Astrocyte of the cerebellum (primary cell): ENCODE measurements at regions of chr20 and their contacts with region 1.

Region 1: GRCh38 chr20:24981790-24982189 is 10.8 kb downstream of the APMAP start:
- DNase-seq: no peak
- H3K4me3 ChIP-seq: no peak overlapping the region
- CTCF ChIP-seq: no peak

Region 2: DNA sequence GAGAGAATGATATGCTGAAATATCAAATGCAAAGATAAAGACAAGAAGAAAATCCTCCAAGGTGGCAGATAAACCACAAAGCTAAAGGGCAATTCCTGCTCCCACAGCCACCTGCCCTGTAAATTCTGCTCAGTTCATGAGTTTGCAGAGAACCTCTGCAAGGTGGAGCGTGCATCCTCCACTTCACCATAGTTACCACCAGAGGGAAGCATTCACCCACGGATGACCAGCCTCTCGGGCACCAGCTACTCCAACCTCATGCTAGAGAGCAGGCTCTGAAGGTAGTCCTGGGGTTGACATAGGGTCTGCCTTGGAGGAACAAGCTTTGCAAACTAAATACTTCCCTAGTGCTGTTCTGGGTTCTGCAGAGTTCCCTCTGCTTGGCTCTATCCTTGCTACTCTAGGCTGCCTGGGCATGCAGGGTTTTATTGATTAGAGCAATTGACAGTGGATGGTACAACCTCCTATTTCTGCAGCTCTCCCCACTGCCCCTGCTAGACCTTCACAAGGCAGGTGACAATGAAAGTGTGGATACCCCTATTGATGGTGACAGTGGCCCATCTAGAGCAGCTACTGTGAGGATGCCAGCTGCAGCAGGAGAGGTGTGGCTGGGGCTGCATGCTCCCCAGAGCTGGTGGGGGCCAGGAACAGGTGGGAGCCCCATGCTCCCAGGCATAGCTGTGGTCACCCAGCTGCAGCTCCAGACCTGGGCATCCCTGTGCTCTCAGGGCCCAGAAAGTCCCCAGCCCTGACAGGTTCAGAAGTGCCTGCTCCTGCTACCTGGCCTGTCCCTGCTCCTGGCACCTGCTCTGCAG is 1044.3 kb before region 1 on chr20:
- in situ Hi-C with region 1: loop called (anchors 10 kb)
- DNase-seq: peak; percentile 15
- H3K4me3 ChIP-seq: no peak overlapping the region
- CTCF ChIP-seq: peak; percentile 73

Region 3: DNA sequence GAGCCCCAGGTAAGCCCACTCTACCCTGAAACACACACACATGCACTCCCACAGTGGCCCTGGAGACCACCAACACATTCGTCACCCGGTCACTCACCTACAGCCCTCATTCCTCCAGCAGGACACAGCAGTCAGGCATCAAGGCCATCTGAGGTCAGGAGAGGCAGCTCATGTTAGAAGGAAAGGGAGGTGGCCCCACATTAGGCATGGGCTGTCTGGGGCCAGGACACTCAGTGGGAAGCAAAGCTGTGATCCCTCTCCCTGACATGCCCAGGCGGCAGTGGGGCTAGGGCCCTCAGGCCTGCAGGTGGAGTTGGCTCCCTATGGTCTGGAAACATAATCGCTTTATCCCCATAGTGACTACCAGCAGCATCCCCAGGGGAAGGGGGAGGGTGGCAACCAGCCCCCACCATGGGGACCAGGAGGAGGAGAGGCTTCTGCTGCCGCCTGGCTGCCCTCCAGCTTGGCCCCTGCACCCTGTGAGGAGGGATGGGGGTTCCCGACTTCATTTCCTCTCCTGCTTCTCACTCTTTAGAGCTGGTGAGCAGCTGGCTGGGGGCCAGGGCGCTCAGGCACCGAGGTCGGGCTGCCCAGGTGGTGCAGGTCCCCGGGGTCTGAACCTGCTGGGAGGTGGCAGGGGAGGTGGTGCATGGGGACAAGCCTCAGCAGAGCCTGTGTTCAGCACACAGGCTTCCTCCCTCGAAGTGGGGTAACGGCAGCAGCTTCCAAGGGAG is 109.3 kb before region 1 on chr20:
- in situ Hi-C with region 1: no loop called
- DNase-seq: no peak
- H3K4me3 ChIP-seq: no peak overlapping the region
- CTCF ChIP-seq: no peak

Region 4: GRCh38 chr20:24934101-24934661 is 47.6 kb before region 1 on chr20:
- in situ Hi-C with region 1: no loop called
- DNase-seq: no peak
- H3K4me3 ChIP-seq: no peak overlapping the region
- CTCF ChIP-seq: no peak